Ascending aorta (tissue), 2 donors: ENCODE measurements at regions of chr16 and their contacts with region 1.

Region 1: GRCh38 chr16:65117811-65118448 is 3.9 kb downstream of the CDH11 start:
- DNase-seq: peak in 1 of 2 donors; percentile 84
- H3K4me3 ChIP-seq: no peak overlapping the region
- H3K27ac ChIP-seq: peak overlapping the region in 1 of 2 donors; percentile 40
- H3K4me1 ChIP-seq: peaks cover 3 to 35% of the 10 kb centered on the region in 2 donors
- H3K27me3 ChIP-seq: no peaks in the 10 kb centered on the region
- CTCF ChIP-seq: peak; percentile 63 to 91 (median 83)

Region 2: DNA sequence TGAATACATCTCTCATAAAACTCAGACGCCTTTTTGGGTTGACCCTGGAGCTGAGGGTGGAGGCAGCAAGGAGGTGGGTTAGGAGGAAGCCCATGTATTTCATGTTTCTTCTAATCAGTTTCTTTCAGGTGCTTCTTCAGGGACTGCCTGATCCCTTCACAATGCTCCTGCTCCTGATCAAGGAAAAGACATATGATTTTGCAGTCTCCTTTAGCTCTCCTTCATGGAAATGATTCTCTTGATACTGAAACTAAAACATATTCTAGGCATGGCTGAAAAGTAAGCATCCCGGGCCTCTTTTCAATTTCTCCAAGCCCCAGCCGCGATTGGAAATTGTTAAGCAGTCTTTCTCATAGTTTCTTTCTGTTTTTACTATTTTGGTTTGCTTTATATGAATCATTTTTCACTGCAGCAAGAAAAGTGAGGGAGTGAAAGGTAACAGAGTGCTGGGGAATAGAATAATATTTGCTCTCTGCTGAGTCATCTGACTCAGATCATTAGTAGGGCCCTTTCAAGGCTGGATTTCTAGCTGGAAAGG is 726.8 kb before region 1 on chr16:
- intact Hi-C with region 1: loop called (anchors 5 kb)
- DNase-seq: no peak
- H3K4me3 ChIP-seq: peak overlapping the region in 1 of 2 donors; percentile 53
- H3K27ac ChIP-seq: peak overlapping the region; percentile 76 to 89
- H3K4me1 ChIP-seq: peaks cover 0 to 7% of the 10 kb centered on the region in 2 donors
- H3K27me3 ChIP-seq: no peaks in the 10 kb centered on the region
- CTCF ChIP-seq: no peak

Region 3: GRCh38 chr16:64782484-64782883 is 335.4 kb before region 1 on chr16:
- intact Hi-C with region 1: loop called (anchors 10 kb)
- DNase-seq: no peak
- H3K4me3 ChIP-seq: no peak overlapping the region
- H3K27ac ChIP-seq: no peak overlapping the region
- H3K4me1 ChIP-seq: peaks cover 0 to 4% of the 10 kb centered on the region in 2 donors
- H3K27me3 ChIP-seq: no peaks in the 10 kb centered on the region
- CTCF ChIP-seq: no peak

Region 4: DNA sequence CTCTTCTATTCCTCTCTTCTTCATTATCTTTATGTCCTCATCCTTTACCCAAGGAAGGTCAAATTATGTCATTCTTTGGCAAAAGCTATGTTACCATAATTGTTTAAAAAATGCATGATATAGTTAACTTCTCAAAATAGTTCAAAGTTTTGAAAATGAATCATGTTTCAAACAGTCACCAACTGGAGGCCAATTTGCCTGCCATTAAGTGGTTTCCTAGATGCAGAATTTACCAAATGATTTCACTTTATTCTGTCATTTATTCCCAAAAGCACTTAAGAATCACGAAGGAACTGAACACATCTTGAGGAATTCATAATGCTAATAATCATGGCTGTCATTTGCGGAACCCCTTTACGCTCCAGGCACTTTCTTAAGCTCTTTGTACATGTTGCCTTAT is 194.9 kb after region 1 on chr16:
- intact Hi-C with region 1: loop called (anchors 5 kb)
- DNase-seq: no peak
- H3K4me3 ChIP-seq: no peak overlapping the region
- H3K27ac ChIP-seq: peak overlapping the region; percentile 69 to 74
- H3K4me1 ChIP-seq: peaks cover 10 to 31% of the 10 kb centered on the region in 2 donors
- H3K27me3 ChIP-seq: no peaks in the 10 kb centered on the region
- CTCF ChIP-seq: no peak